ENCODE measurements at regions of chr5 and their contacts with region 1.

Region 1: DNA sequence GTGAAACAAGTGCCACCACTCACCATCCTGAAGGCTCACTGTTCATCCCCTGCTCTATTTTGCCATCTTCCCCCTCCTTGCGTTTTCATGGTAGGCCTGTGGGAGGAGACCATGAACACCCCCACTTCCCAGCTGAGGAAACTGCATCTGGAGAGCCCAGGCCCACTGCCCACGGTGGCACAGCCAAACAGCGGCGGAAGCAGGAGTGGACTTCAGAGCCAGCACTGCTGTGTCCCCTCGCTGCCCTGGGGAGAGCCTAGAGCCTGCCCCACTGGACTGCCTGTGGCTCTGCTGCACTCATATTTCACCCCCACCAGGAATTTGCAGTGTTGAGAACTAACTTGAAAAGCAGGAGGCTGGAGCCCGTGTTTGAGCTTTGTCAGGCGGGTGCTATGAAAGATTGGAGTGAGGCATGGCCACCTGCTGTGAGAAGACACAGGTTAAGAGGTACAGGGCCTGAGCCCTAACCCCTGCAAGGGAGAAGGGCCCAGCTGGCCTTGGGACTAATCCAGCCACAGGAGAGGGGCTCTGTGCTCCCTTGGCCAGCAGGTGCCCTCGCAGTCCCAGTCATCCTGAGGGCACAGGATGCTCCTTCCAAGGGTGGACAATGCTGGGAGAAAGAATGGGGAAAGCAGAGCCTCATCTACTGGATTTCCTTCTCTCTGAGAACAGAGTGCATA is 79.0 kb downstream of the MACROH2A1 start:
- DNase-seq: peak in 2 of 7 donors; percentile 14 to 33
- H3K4me3 ChIP-seq: no peak overlapping the region
- H3K27ac ChIP-seq: no peak overlapping the region
- H3K4me1 ChIP-seq: no peaks in the 10 kb centered on the region
- H3K27me3 ChIP-seq: no peaks in the 10 kb centered on the region
- CTCF ChIP-seq: no peak
- POLR2A ChIP-seq: no peak

Region 2: DNA sequence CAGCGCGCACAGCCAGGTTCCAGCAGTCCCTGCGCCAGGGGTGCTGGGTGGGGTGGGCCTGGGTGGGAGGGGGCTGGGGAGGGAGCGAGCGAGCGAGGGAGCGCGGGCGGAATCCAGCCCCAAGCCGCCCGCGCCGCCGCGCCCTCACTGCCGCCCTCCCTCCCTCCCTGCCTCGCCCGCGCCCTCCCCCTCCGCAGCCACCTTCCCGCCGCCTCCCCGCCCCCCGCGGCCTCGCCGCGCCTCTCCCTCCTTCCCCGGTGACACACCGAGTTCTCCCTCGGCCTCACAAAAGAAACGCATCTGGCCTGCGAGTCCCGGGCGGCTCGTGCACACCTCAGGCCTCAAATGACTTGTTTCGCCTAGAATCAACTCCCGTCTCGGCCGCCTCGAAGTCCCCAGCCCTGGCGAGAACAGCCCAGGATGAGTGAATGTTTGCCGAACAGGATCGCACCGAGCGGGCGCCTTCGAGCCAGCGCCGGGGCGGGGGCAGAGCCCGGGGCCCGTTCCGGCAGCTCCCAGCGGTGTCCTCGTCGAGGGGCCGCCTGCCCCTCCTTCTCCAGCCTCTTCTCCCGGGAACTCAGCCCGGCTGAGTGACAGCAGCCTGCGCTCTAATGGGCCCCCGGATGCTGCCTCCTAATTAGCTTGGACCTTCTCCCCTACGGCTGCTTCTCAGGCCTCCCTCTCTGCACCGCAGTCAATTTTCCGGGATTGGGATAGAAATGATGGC is 285.7 kb before region 1 on chr5:
- intact Hi-C with region 1: loop called in 1 of 2 experiments (anchors 10 kb)
- DNase-seq: peak in 6 of 7 donors; percentile 29 to 70 (median 52)
- H3K4me3 ChIP-seq: peak overlapping the region in 1 of 4 donors; percentile 64
- H3K27ac ChIP-seq: no peak overlapping the region
- H3K4me1 ChIP-seq: peaks cover 27 to 43% of the 10 kb centered on the region in 2 donors
- H3K27me3 ChIP-seq: peaks cover 89% of the 10 kb centered on the region
- CTCF ChIP-seq: no peak
- POLR2A ChIP-seq: no peak

Region 3: GRCh38 chr5:135191084-135191826 is 128.8 kb before region 1 on chr5:
- intact Hi-C with region 1: loop called in 1 of 2 experiments (anchors 10 kb)
- DNase-seq: peak; percentile 73 to 87 (median 80)
- H3K4me3 ChIP-seq: peak overlapping the region in 2 of 4 donors; percentile 35 to 69
- H3K27ac ChIP-seq: no peak overlapping the region
- H3K4me1 ChIP-seq: peaks cover 5 to 6% of the 10 kb centered on the region in 2 donors
- H3K27me3 ChIP-seq: peaks cover 5% of the 10 kb centered on the region
- CTCF ChIP-seq: peak; percentile 82 to 91 (median 86)
- POLR2A ChIP-seq: no peak

Measured in adrenal gland (tissue), 19 donors.